ENCODE measurements at regions of chr15 and their contacts with region 1.

Region 1: GRCh38 chr15:90845201-90845949 is 23.0 kb upstream of the FURIN start:
- DNase-seq: peak; percentile 85
- H3K4me3 Mint-ChIP-seq: no peak overlapping the region
- H3K27ac Mint-ChIP-seq: peak overlapping the region; percentile 81
- H3K4me1 Mint-ChIP-seq: peaks cover 24% of the 10 kb centered on the region
- H3K27me3 Mint-ChIP-seq: no peaks in the 10 kb centered on the region

Region 2: DNA sequence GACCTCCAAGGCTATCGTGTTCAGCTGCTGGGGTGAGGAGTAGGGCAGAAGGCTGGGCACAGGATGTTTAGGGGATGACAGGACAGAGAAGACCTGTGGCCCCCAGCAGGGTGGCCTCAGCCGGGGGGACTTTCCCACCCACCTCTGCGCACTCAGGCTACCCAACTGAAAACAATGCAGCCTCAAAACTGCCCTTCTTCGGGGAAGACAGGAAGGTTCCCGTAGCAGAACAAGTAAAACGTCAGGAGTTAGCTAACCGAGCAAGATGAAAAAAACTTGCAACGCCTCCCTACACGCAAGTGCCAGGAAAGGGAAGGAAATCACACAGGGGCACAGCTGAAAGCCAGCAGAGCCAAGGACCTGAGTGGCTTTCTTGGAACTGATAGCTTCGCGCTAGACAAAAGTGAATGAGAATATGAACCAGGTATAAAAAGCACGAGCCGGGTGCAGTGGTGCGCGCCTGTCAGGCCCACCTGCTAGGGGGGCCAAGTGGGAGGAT is 15.4 kb before region 1 on chr15:
- CTCF ChIA-PET with region 1: no interaction called
- POLR2A ChIA-PET with region 1: interaction called, 33 read pairs
- intact Hi-C with region 1: no loop called
- DNase-seq: peak; percentile 91
- H3K4me3 Mint-ChIP-seq: peak overlapping the region; percentile 59
- H3K27ac Mint-ChIP-seq: peak overlapping the region; percentile 100
- H3K4me1 Mint-ChIP-seq: peaks cover 39% of the 10 kb centered on the region
- H3K27me3 Mint-ChIP-seq: no peaks in the 10 kb centered on the region